ENCODE measurements at regions of chr19 and their contacts with region 1.

Region 1: DNA sequence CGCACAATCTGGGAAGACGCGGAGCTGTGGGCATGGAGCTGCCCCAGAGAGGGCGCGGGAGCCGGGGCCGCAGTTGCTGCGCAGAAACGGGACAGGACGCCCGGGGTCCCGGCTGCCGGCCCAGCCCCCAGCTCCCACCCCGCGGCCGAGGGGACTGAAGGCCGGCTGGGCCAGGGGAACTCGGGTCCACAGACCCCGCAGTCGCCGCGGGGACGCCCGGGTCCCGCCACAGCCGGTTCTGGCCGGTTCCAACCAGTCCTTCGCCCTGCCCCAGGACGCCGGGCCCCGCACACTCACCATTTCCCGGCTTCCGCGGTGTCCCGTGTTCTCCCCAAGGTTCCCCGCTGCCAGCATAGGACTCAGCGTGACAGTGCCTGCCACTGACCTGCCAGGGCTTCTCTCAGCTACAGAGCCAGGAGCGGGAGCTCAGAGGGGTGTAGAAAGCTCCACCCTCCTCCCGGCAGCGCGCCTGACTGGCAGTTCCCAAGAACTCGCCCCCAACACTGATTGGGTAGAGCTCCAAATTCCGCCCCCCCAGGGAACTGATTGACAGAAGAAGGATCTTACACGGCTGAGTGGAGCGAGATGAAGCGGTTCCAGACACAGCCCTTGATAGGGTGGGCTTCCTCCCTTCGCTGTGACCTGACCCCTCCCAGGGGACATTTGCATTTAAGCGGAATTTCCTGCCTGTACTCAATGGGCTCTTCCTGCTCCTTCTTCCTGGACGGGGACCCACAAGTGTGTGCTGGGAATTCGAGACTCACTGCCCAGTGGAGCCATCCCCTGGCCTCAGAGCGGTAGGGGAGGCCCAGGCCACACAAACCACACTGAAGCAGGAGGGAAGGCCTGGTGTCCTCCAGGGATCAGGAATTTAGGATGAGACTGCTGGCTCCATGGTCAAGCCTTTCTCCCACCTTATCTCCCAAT is at the start of gene ZNF442:
- H3K4me3 Mint-ChIP-seq: peak within 1 kb of the TSS; percentile 96
- H3K27ac Mint-ChIP-seq: peak within 1 kb of the TSS; percentile 91
- H3K4me1 Mint-ChIP-seq: peaks cover 32% of the 10 kb centered on the region
- H3K27me3 Mint-ChIP-seq: peaks cover 14% of the 10 kb centered on the region

Region 2: DNA sequence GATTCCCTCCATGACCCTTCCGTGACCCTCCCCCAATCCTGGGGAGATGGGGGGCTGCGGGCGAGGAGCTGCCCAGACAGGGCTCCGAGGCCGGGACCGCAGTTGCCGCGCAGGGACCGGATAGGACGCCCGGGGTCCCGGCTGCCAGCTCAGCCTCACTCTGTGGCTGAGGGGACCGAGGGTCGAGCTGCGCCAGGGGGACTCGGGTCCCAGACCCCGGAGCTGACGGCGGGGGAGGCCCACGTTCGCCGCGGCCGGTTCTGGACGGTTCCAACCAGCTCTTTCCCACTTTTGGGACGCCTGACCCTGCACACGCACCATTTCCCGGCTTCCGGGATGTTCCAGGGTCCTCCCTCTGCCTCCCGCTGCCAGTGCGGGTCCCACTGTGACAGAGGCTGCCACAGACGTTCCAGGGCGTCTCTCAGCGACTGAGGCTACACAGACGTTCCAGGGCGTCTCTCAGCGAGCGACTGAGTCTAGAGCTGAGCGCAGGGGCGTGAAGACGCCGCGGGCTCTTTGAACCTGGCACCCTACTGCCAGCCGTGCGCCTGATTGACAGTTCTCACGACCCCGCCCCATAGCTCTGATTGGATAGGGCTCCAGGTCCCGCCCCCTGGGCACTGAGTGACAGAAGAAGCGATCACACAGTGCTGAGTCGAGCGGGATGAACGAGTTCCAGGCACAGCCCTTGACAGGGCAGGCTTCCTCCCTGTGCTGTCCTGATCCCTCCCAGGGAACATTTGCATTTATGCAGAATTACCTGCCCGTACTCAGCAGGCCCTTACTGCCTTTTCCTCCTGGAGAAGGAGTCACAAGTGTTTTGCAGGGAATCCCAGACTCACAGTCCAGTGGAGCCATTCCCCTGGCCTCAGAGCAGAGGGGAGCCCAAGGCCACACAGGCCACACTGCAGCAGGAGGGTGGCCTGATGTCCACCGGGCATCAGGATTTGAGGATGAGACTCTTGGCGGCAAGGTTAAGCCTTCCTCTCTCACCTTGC is 32.0 kb before region 1 on chr19 and contains the start of gene ZNF563:
- intact Hi-C with region 1: loop called (anchors 1 kb)
- H3K4me3 Mint-ChIP-seq: peak within 1 kb of the TSS; percentile 98
- H3K27ac Mint-ChIP-seq: peak within 1 kb of the TSS; percentile 96
- H3K4me1 Mint-ChIP-seq: peaks cover 26% of the 10 kb centered on the region
- H3K27me3 Mint-ChIP-seq: no peaks in the 10 kb centered on the region